Left ventricle myocardium inferior (tissue), 1 donor: ENCODE measurements at regions of chr3 and their contacts with region 1.

Region 1: DNA sequence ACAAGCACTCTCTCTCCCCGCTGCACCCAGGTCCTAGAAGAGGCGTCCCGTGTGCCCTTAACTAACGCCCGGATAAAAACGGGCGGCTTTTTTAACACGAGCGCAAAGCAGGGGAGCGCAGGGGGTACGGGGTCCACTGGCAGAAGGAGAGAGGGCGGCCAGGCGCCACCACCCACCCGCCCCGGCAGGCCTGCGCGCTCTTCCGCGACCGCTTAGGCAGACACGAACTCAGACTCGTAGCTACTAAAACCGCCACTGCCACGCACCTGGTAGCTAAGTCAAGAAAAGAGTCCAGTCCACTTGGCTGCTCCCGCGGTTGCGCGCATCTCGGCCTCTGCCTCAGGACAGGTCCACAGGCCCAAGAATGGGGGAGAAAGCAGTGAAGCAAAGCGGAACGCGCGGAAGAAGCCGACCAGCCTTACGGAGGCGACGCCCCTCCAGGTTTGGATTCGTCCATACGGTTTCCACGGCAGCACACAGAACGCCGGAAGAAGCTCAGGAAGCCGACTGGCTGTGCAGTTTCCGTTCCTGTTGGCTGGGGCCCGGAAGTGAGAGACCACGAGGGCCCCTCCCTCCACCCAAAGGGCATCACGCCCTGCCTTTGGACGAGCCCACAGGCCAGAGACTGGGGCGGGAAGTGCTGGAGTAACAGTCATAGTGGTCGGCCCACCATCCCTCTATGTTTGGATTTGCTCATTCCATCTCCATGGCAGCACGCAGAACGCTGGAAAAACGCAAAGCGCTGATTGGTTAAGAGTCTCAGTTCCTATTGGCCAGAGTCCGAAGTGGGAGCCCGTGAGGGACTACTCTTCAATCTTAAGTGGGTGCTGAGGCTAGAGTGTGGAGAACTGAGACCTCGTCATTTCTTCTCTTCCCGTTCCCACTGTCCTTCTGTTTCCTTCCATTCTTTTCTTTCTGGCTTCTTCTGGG is at the start of gene ULK4:
- DNase-seq: peak; percentile 97
- H3K4me3 ChIP-seq: peak within 1 kb of the TSS; percentile 96
- H3K27ac ChIP-seq: peak within 1 kb of the TSS; percentile 79
- H3K4me1 ChIP-seq: peaks cover 19% of the 10 kb centered on the region
- H3K27me3 ChIP-seq: no peaks in the 10 kb centered on the region
- CTCF ChIP-seq: no peak
- total RNA-seq, gene ULK4: 1.8 TPM

Region 2: GRCh38 chr3:40680685-40681657 is 1281.0 kb before region 1 on chr3:
- intact Hi-C with region 1: no loop called
- DNase-seq: no peak
- H3K4me3 ChIP-seq: no peak overlapping the region
- H3K27ac ChIP-seq: peak overlapping the region; percentile 15
- H3K4me1 ChIP-seq: peaks cover 15% of the 10 kb centered on the region
- H3K27me3 ChIP-seq: no peaks in the 10 kb centered on the region
- CTCF ChIP-seq: no peak

Region 3: GRCh38 chr3:42001777-42002176 is 39.8 kb after region 1 on chr3:
- intact Hi-C with region 1: loop called (anchors 2 kb)
- DNase-seq: no peak
- H3K4me3 ChIP-seq: no peak overlapping the region
- H3K27ac ChIP-seq: no peak overlapping the region
- H3K4me1 ChIP-seq: peaks cover 16% of the 10 kb centered on the region
- H3K27me3 ChIP-seq: no peaks in the 10 kb centered on the region
- CTCF ChIP-seq: no peak

Region 4: DNA sequence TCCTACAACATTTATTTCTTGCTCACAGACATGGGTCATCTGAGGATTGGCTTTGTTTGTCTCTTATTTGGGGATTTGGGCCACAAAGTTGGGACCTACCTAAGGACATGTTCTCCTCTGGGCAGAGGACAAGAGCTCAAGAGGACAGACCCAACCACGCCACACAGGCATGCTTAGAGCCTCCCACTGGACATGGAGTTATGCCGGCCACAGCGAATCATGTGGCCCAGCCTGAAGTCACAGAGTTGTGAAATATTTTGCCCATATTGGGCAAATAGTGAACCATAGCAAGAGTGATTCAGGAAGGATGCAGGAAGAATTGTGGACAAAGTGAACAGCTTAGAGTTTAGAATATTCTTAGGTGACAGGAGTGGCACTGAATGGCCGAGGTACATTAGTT is 139.0 kb after region 1 on chr3:
- intact Hi-C with region 1: loop called (anchors 5 kb)
- DNase-seq: peak; percentile 45
- H3K4me3 ChIP-seq: no peak overlapping the region
- H3K27ac ChIP-seq: peak overlapping the region; percentile 87
- H3K4me1 ChIP-seq: peaks cover 74% of the 10 kb centered on the region
- H3K27me3 ChIP-seq: no peaks in the 10 kb centered on the region
- CTCF ChIP-seq: no peak

Region 5: GRCh38 chr3:42247576-42248027 is 285.6 kb after region 1 on chr3:
- intact Hi-C with region 1: no loop called
- DNase-seq: peak; percentile 19
- H3K4me3 ChIP-seq: no peak overlapping the region
- H3K27ac ChIP-seq: no peak overlapping the region
- H3K4me1 ChIP-seq: no peaks in the 10 kb centered on the region
- H3K27me3 ChIP-seq: peaks cover 29% of the 10 kb centered on the region
- CTCF ChIP-seq: peak; percentile 78

Region 6: GRCh38 chr3:42535981-42536790 is 574.2 kb after region 1 on chr3:
- intact Hi-C with region 1: no loop called
- DNase-seq: no peak
- H3K4me3 ChIP-seq: no peak overlapping the region
- H3K27ac ChIP-seq: no peak overlapping the region
- H3K4me1 ChIP-seq: peaks cover 15% of the 10 kb centered on the region
- H3K27me3 ChIP-seq: no peaks in the 10 kb centered on the region
- CTCF ChIP-seq: peak; percentile 60